ENCODE measurements at regions of chr2 and their contacts with region 1.

Region 1: GRCh38 chr2:162058973-162059668 is 14.9 kb downstream of the DPP4 start:
- DNase-seq: peak; percentile 54
- ATAC-seq: peak; percentile 78
- H3K4me3 Mint-ChIP-seq: peak overlapping the region; percentile 52
- H3K27ac Mint-ChIP-seq: peak overlapping the region; percentile 85
- H3K4me1 Mint-ChIP-seq: peaks cover 86% of the 10 kb centered on the region
- H3K27me3 Mint-ChIP-seq: no peaks in the 10 kb centered on the region

Region 2: DNA sequence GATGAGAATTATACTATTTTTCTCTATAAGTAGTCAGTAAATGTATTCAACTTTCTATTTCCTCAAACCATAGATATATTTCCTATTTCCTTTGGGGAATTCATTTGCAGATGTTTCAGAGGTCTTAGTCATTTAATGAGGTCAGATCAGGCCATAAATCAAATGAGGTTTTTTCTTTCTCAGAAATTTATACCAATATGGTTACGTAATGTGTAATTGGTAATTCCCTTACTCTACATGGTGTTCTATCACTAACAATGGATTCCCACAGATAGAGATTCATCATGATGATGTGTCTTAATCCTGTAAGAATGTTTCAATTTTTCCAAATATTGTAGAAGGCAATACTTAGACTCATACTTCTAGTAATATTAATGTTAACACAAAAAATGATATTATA is 93.1 kb before region 1 on chr2:
- CTCF ChIA-PET with region 1: no interaction called
- POLR2A ChIA-PET with region 1: no interaction called
- intact Hi-C with region 1: loop called (anchors 1 to 2 kb)
- DNase-seq: no peak
- ATAC-seq: peak; percentile 68
- H3K4me3 Mint-ChIP-seq: no peak overlapping the region
- H3K27ac Mint-ChIP-seq: no peak overlapping the region
- H3K4me1 Mint-ChIP-seq: peaks cover 26% of the 10 kb centered on the region
- H3K27me3 Mint-ChIP-seq: peaks cover 3% of the 10 kb centered on the region

Region 3: DNA sequence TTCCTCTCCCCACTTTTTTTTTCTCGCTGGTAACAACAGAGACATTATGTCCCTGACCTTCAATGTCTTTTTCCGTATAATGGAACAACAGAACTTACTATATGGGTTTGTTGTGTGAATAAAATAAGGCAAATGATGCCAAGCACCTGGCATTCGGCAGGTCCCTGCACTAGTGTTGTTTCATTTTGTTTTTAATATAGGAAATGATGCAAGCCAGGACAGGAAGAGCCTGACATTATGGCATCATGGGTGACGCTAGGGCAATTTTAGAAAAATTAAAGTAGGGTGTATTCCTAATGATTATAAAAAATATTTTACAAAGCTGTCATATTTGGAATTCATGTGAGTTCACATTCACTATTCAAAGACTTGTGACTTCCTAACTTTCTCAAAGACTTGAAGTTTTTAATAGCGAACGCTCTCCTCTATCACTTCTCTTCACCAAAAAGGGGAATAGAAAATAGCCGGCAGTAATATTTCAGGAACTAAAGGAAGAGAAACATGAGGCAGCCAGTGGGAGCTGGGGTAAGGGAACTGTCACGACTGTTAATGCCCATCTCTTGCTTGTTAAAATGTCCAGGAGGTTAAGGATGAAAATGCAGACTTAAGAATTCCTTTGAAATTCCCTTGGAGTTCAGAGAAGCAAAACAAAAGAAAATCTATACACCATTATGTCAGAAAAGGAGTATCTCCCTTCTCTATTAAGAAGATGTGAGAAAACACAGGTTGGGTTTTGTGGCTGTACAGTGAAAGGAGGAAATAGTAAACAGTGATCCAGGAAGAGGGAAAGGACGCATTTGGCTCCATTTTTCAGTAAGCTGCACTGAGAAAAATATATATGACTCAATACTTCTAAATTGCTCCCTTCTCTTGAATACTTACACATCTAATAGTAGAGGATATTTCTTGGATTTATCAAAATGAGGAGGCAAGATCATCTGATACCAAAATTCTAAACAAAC is 45.3 kb before region 1 on chr2:
- CTCF ChIA-PET with region 1: no interaction called
- POLR2A ChIA-PET with region 1: no interaction called
- intact Hi-C with region 1: loop called (anchors 2 kb)
- DNase-seq: no peak
- ATAC-seq: peak; percentile 27
- H3K4me3 Mint-ChIP-seq: peak overlapping the region; percentile 47
- H3K27ac Mint-ChIP-seq: peak overlapping the region; percentile 95
- H3K4me1 Mint-ChIP-seq: peaks cover 56% of the 10 kb centered on the region
- H3K27me3 Mint-ChIP-seq: no peaks in the 10 kb centered on the region

Region 4: GRCh38 chr2:162037028-162037795 is 21.9 kb before region 1 on chr2:
- CTCF ChIA-PET with region 1: no interaction called
- POLR2A ChIA-PET with region 1: no interaction called
- intact Hi-C with region 1: no loop called
- DNase-seq: no peak
- ATAC-seq: no peak
- H3K4me3 Mint-ChIP-seq: no peak overlapping the region
- H3K27ac Mint-ChIP-seq: no peak overlapping the region
- H3K4me1 Mint-ChIP-seq: no peaks in the 10 kb centered on the region
- H3K27me3 Mint-ChIP-seq: no peaks in the 10 kb centered on the region

Measured in activated CD4-positive, alpha-beta T cell treated with anti-CD3 and anti-CD28 coated beads for 36 hours (primary cell).